ENCODE measurements at regions of chr12 and their contacts with region 1.

Region 1: GRCh38 chr12:14858513-14858912 is 15.2 kb upstream of the ART4 start:
- DNase-seq: no peak
- H3K4me3 ChIP-seq: no peak overlapping the region
- H3K27ac ChIP-seq: no peak overlapping the region
- H3K4me1 ChIP-seq: no peaks in the 10 kb centered on the region; the same call in 1 of the 2 replicates
- H3K27me3 ChIP-seq: no peaks in the 10 kb centered on the region
- CTCF ChIP-seq: no peak

Region 2: GRCh38 chr12:15007551-15007950 is 149.0 kb after region 1 on chr12:
- CTCF ChIA-PET with region 1: interaction called, 10 read pairs
- POLR2A ChIA-PET with region 1: no interaction called
- intact Hi-C with region 1: no loop called
- DNase-seq: no peak
- H3K4me3 ChIP-seq: no peak overlapping the region
- H3K27ac ChIP-seq: no peak overlapping the region
- H3K4me1 ChIP-seq: no peaks in the 10 kb centered on the region
- H3K27me3 ChIP-seq: no peaks in the 10 kb centered on the region
- CTCF ChIP-seq: no peak

Measured in PC-9 (cell line).